ENCODE measurements at regions of chr11 and their contacts with region 1.

Region 1: DNA sequence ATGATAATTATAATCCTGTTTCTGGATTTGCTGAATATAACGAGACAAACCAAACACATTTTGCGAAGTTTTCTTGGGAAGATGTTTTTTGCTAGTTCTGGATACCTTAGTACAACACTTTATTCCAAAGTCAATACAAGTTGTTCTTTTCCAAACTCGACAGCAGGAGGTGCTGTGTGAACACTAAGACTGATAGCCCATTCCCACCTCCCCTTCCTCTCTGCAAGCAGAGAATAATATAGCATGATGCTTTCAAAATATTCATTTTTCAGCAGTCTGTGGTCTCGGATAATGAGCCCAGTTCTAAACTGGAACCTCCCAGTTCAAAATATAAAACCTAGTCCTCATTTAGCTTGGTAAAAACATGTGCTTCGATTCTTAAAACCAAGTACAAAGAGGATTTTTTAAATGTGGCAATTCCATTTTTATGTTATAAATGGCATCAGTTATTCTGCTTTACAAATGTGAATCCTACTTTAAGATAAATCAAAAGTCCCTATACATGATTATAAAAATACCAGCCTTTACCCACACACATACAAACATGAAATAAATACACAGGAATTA is 129.1 kb downstream of the DCDC1 start:
- DNase-seq: peak; percentile 29
- H3K4me3 ChIP-seq: no peak overlapping the region
- H3K27ac ChIP-seq: no peak overlapping the region
- H3K4me1 ChIP-seq: no peaks in the 10 kb centered on the region
- H3K27me3 ChIP-seq: no peaks in the 10 kb centered on the region
- CTCF ChIP-seq: peak; percentile 61 to 72

Region 2: DNA sequence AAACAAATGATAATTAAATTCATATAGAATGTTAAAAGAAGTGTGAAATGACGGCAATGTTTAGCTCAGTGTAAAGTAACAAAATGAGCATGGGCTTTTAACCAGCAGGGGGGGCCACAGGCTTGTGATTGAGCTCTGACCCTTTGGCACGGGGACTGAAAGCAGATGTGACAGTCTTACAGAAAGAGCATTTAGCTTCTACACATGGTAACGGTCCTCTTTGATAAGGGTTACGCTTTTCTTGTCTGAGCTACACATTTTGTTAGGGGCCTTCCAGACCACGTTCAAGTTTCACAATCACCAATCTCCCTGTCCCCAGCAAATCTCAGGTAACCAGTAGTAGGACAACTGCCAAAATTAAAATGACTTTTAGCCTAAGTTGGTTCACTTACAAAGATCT is 133.4 kb before region 1 on chr11:
- CTCF ChIA-PET with region 1: interaction called, 5 read pairs
- dilution Hi-C with region 1: no loop called
- in situ Hi-C with region 1: loop called in 1 of 2 experiments (anchors 10 kb)
- intact Hi-C with region 1: no loop called
- DNase-seq: peak; percentile 39
- H3K4me3 ChIP-seq: no peak overlapping the region
- H3K27ac ChIP-seq: no peak overlapping the region
- H3K4me1 ChIP-seq: no peaks in the 10 kb centered on the region
- H3K27me3 ChIP-seq: no peaks in the 10 kb centered on the region
- CTCF ChIP-seq: peak; percentile 77 to 85

Region 3: DNA sequence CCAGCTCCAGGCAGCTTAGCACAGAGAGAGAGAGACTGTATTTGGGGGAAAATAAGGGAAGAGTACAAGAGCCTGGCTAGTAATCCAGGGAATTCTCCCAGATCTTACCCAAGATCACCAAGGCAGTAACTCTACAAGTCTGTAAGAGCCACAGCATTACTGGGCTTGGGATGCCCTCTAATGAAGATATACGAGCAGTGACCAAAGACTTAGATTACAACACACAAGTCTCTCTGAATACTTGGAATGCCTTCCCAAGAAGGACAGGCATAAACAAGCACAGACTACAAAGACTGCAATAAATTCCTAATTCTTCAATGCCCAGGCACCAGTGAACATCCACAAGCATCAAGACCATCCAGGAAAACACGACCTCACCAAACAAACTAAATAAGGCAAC is 147.0 kb after region 1 on chr11:
- CTCF ChIA-PET with region 1: no interaction called
- dilution Hi-C with region 1: no loop called
- in situ Hi-C with region 1: loop called in 1 of 2 experiments (anchors 10 kb)
- intact Hi-C with region 1: loop called (anchors 1 kb)
- DNase-seq: peak; percentile 37
- H3K4me3 ChIP-seq: no peak overlapping the region
- H3K27ac ChIP-seq: no peak overlapping the region
- H3K4me1 ChIP-seq: no peaks in the 10 kb centered on the region
- H3K27me3 ChIP-seq: no peaks in the 10 kb centered on the region
- CTCF ChIP-seq: peak in 1 of 2 donors; percentile 52

Region 4: DNA sequence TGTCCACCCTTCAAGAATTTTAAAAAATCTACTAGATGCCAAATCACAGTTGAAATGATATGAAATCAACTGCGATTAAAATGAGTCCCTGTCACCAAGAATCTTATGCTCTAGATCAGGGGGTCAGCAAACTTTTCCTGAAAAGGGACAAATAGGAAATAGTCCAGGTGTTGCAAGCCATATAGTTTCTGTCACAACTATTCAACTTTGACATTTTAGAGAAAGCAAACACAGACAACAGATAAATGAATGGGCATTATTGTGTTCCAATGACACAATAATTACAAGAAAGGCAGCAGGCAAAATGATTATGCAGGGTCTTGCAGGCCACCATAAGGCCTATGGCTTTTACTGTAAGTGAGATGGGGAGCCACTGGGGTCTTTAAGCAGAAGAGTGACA is 210.4 kb after region 1 on chr11:
- CTCF ChIA-PET with region 1: no interaction called
- dilution Hi-C with region 1: no loop called
- in situ Hi-C with region 1: no loop called
- intact Hi-C with region 1: no loop called
- DNase-seq: no peak
- H3K4me3 ChIP-seq: no peak overlapping the region
- H3K27ac ChIP-seq: no peak overlapping the region
- H3K4me1 ChIP-seq: no peaks in the 10 kb centered on the region
- H3K27me3 ChIP-seq: no peaks in the 10 kb centered on the region
- CTCF ChIP-seq: no peak

Region 5: GRCh38 chr11:31870609-31871309 is 630.3 kb after region 1 on chr11:
- CTCF ChIA-PET with region 1: no interaction called
- dilution Hi-C with region 1: no loop called
- in situ Hi-C with region 1: no loop called
- intact Hi-C with region 1: loop called (anchors 1 kb)
- DNase-seq: peak; percentile 23
- H3K4me3 ChIP-seq: no peak overlapping the region
- H3K27ac ChIP-seq: no peak overlapping the region
- H3K4me1 ChIP-seq: peaks cover 7% of the 10 kb centered on the region
- H3K27me3 ChIP-seq: no peaks in the 10 kb centered on the region
- CTCF ChIP-seq: peak; percentile 42 to 83

Region 6: DNA sequence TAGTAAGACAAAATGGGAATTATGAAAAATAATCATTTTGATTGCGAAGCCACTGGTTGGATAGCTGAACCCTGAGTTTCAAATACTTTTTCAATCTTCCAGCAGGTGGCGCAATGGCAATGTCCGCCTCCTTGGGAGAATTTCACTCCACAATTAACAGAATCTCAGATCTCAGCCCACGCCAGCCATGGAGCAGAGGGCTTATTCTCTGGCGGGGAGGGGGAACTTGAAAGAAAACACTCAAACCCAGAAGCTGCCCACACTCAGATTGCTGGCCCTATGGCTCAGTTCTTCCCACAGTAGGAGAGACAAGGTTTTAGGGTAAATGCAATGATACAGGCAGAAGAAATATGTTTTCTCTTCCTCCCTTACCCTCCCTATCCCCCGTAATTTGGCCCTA is 811.8 kb after region 1 on chr11:
- CTCF ChIA-PET with region 1: no interaction called
- dilution Hi-C with region 1: no loop called
- in situ Hi-C with region 1: no loop called
- intact Hi-C with region 1: loop called (anchors 2 kb)
- DNase-seq: peak; percentile 25
- H3K4me3 ChIP-seq: no peak overlapping the region
- H3K27ac ChIP-seq: no peak overlapping the region
- H3K4me1 ChIP-seq: peaks cover 11% of the 10 kb centered on the region
- H3K27me3 ChIP-seq: no peaks in the 10 kb centered on the region
- CTCF ChIP-seq: peak; percentile 61 to 74

Measured in mammary epithelial cell (primary cell).